ENCODE measurements at regions of chr11 and their contacts with region 1.

Region 1: DNA sequence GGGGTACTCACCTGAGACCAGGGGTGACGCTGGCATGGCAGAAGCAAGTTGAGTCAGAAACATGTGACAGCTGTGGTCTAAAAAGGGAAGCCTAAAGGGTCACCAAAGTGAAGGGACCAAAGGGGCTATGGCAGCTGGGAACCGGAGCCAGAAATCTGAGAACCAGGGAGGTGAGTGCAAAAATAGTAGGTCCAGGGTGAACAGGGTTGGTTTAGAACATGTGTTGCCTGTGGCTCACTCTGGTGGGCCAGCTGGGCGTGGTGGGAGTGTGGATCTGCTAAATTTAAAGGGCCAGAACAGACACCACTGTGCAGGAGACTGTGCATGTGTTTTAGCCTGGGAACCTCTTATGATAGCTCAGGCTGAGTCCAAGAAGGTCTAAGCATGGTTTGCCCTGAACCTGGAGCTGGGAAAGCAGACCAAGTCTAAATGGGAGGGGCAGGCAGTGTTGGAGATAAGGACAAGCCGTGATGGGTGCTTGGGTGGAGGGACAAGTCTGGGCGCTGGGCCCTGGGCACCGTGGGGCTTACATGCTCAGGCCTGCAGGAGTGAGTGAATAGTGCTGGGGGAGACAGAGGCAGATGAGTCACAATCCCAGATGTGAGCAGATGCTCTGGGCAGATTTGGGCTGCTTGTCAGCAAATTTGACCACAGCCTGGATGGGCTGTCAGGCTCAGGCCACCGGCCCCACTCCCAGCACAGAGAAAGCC is 41.4 kb upstream of the ZBED5 start:
- DNase-seq: peak; percentile 96
- H3K4me3 Mint-ChIP-seq: peak overlapping the region; percentile 58
- H3K27ac Mint-ChIP-seq: peak overlapping the region; percentile 98
- H3K4me1 Mint-ChIP-seq: peaks cover 62% of the 10 kb centered on the region
- H3K27me3 Mint-ChIP-seq: no peaks in the 10 kb centered on the region
- CTCF ChIP-seq: no peak

Region 2: GRCh38 chr11:10803676-10804075 is 95.6 kb before region 1 on chr11:
- CTCF ChIA-PET with region 1: interaction called, 7 read pairs
- POLR2A ChIA-PET with region 1: interaction called, 147 read pairs
- intact Hi-C with region 1: loop called (anchors 1 kb)
- DNase-seq: no peak
- H3K4me3 Mint-ChIP-seq: no peak overlapping the region
- H3K27ac Mint-ChIP-seq: no peak overlapping the region
- H3K4me1 Mint-ChIP-seq: peaks cover 4% of the 10 kb centered on the region
- H3K27me3 Mint-ChIP-seq: no peaks in the 10 kb centered on the region
- CTCF ChIP-seq: no peak

Region 3: DNA sequence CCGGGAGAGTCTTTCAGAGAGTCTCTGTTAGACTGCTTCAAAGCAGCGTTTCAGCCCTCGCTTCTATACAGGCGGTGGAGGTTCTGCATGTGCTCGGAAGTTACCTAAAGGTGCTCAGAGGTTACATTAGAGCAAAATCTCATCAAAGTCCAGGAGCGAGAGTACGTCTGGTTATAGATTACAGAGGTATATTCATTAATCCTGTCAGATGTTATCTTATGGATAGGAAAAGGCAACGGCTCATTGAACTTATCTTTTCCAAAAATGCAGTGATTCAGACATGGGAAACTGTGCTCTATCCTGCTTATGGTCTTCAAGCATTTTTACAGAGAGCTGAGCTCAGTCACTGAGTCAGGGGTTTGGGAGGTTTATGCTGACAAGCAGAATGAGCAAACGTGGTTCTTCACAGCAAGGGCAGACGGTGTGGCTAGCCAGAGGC is 32.4 kb before region 1 on chr11:
- CTCF ChIA-PET with region 1: no interaction called
- POLR2A ChIA-PET with region 1: interaction called, 326 read pairs
- intact Hi-C with region 1: no loop called
- DNase-seq: no peak
- H3K4me3 Mint-ChIP-seq: no peak overlapping the region
- H3K27ac Mint-ChIP-seq: no peak overlapping the region
- H3K4me1 Mint-ChIP-seq: no peaks in the 10 kb centered on the region
- H3K27me3 Mint-ChIP-seq: no peaks in the 10 kb centered on the region
- CTCF ChIP-seq: no peak

Region 4: DNA sequence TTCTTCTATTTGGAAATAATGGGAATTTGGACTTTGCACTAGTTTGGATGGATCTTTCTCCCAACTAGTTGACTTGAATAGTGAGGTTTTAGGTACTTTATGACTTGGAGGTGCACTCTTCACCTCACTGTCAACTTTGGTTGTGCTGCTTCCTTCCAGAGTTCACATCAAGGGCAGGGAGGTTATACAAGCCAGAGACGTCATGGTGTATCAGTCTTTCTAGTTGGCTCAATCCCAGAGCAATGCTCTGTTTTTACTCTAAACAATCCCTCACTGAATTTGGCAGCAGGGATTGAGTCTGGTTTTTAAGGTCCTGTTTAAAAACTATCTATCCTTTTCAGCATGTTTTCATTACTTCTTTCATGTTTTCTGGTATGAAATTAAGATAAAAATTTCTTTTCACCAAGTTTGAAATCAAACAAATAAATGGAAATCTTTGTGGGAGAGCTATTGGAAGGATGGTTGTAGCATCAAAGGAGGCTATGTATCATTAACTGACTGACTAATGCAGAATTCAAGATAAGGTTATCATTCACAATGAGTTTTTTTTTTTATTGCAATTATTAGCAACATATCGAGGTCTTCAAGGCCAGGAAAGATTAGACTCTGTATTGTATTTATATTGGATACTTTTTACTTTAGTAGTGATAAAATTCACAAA is 13.4 kb before region 1 on chr11:
- CTCF ChIA-PET with region 1: interaction called, 15 read pairs
- POLR2A ChIA-PET with region 1: interaction called, 43 read pairs
- intact Hi-C with region 1: no loop called
- DNase-seq: no peak
- H3K4me3 Mint-ChIP-seq: no peak overlapping the region
- H3K27ac Mint-ChIP-seq: no peak overlapping the region
- H3K4me1 Mint-ChIP-seq: no peaks in the 10 kb centered on the region
- H3K27me3 Mint-ChIP-seq: no peaks in the 10 kb centered on the region
- CTCF ChIP-seq: no peak

Region 5: DNA sequence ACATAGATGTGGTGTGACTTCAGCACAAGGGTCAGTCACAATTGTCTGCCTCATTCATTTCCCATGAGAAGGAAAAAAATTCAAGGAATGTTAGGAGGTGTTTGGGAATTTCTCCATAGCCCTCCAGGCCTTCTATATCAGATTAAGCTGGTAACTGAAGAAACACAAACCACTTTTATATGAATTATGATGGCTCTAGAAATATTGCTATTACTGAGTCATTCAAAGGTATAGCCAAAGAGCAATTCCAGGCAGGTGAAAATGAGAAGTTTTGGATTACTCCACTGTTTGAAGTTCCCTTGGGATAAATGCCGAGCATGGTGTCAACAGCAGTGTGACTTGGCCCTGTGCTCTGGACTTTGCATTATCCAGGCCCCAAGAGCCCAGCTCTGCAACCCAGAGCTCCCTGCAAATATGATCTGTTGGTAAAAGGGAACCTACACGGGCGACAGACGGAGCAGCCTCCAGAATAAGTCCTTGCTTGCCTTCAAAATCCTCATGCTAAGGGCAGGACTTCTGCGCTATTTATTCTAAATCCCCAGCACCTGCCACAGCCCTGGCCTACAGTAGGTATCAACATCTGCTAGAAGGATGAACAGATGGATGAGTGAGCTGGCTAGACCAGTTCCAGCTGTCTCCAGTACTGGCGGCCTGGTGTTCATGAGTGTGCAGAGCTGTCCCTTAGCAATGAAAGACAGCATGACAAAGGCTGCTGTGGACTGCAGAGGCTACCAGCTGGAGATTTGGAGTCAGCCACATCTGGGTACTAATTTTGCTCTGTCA is 26.1 kb after region 1 on chr11:
- CTCF ChIA-PET with region 1: interaction called, 3 read pairs
- POLR2A ChIA-PET with region 1: interaction called, 35 read pairs
- intact Hi-C with region 1: no loop called
- DNase-seq: no peak
- H3K4me3 Mint-ChIP-seq: no peak overlapping the region
- H3K27ac Mint-ChIP-seq: no peak overlapping the region
- H3K4me1 Mint-ChIP-seq: no peaks in the 10 kb centered on the region
- H3K27me3 Mint-ChIP-seq: no peaks in the 10 kb centered on the region
- CTCF ChIP-seq: no peak

Region 6: DNA sequence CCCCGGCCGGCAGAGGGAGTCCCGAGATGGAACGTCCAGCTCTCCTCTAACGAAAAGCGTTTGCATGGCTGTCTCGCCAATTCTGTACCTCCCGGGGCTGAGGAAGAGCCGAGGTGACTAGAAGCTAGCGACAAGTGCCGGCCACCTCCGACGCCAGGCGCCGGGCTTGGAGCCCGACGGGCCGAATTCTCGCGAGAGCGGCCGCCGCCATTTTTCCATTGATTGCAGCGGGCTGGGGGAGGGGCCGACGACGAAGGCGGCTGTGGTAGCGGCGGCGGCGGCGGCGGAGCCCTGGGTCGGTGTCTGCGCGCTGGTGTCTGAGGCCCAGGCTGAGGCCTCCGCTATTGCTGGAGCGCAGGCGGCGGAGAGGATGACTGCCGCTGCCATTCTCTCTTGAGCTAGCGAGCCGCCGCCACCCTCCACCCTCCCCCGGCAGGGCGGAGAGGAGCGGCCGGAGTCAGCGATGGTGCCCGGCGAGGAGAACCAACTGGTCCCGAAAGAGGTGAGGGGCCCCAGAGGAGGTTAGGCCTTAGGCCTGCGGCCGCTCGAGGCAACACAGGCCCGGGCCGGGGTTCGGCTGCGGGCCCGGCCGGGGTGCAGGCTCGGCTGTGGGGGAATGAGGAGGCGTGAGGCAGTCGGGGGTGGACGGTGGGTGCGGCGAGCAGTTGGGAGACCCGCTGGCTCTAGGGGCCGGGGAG is 942.6 kb after region 1 on chr11 and contains the start of gene USP47:
- CTCF ChIA-PET with region 1: interaction called, 3 read pairs
- POLR2A ChIA-PET with region 1: interaction called, 11 read pairs
- intact Hi-C with region 1: no loop called
- DNase-seq: peak; percentile 87
- H3K4me3 Mint-ChIP-seq: no peak within 1 kb of the TSS
- H3K27ac Mint-ChIP-seq: no peak within 1 kb of the TSS
- H3K4me1 Mint-ChIP-seq: no peaks in the 10 kb centered on the region
- H3K27me3 Mint-ChIP-seq: no peaks in the 10 kb centered on the region
- CTCF ChIP-seq: peak; percentile 58
- total RNA-seq, gene USP47: 41.6 and 46.1 TPM in 2 replicates

Measured in MCF 10A (cell line).